ENCODE measurements at regions of chr11 and their contacts with region 1.

Region 1: GRCh38 chr11:3841426-3842350 is 929 bp upstream of the RHOG start:
- DNase-seq: peak; percentile 93
- H3K4me3 Mint-ChIP-seq: peak overlapping the region; percentile 90
- H3K27ac Mint-ChIP-seq: peak overlapping the region; percentile 96
- H3K4me1 Mint-ChIP-seq: peaks cover 44% of the 10 kb centered on the region
- H3K27me3 Mint-ChIP-seq: no peaks in the 10 kb centered on the region

Region 2: DNA sequence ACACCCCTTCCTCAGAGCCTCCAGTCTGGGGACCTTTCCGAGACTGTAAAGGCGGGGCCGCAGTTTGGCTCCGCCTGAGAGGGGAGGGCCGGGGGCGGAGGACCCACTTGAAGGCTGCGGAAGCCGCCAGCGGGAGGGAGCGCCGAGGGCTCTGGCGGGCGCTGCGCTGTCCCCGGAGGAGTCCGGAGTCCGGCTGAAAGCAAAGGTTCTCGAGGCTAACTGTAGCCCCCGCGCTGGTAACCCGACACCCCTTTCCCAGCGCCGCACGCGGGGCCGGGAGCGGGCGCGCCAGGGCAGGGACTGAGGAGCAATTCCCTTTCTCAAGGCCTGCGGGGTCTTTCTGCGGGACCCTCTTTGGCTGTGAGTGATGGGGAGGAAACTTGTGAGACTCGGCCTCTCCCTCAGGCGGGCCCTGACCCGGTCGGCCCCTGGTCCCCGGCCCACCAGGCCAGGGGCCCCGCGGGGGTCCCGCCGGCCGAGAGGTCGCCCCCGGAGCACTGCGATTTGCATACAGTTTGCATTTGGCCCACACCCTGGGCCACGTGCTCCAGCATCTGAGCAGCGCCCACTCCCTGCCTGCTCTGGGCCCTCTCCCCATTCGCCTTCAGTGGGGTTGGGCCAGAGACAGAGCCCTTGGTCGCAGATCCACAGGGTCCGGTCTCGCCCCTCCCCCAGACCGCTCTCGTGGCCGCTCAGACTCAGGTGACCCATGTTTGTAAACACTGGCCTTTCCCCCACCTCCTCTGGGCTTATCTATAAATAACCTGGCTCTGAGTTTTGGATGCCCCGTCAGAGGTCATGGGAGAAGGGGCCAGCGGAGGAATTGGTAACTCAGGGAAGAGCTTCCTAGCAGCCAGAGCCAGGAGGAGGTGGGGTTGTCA is 199.4 kb before region 1 on chr11:
- CTCF ChIA-PET with region 1: no interaction called
- POLR2A ChIA-PET with region 1: no interaction called
- DNase-seq: peak; percentile 72
- H3K4me3 Mint-ChIP-seq: peak overlapping the region; percentile 61
- H3K27ac Mint-ChIP-seq: no peak overlapping the region
- H3K4me1 Mint-ChIP-seq: peaks cover 9% of the 10 kb centered on the region
- H3K27me3 Mint-ChIP-seq: peaks cover 35% of the 10 kb centered on the region

Region 3: GRCh38 chr11:3781423-3781822 is 60.3 kb before region 1 on chr11:
- CTCF ChIA-PET with region 1: interaction called, 5 read pairs
- POLR2A ChIA-PET with region 1: interaction called, 11 read pairs
- DNase-seq: no peak
- H3K4me3 Mint-ChIP-seq: no peak overlapping the region
- H3K27ac Mint-ChIP-seq: peak overlapping the region; percentile 12
- H3K4me1 Mint-ChIP-seq: peaks cover 50% of the 10 kb centered on the region
- H3K27me3 Mint-ChIP-seq: no peaks in the 10 kb centered on the region

Region 4: DNA sequence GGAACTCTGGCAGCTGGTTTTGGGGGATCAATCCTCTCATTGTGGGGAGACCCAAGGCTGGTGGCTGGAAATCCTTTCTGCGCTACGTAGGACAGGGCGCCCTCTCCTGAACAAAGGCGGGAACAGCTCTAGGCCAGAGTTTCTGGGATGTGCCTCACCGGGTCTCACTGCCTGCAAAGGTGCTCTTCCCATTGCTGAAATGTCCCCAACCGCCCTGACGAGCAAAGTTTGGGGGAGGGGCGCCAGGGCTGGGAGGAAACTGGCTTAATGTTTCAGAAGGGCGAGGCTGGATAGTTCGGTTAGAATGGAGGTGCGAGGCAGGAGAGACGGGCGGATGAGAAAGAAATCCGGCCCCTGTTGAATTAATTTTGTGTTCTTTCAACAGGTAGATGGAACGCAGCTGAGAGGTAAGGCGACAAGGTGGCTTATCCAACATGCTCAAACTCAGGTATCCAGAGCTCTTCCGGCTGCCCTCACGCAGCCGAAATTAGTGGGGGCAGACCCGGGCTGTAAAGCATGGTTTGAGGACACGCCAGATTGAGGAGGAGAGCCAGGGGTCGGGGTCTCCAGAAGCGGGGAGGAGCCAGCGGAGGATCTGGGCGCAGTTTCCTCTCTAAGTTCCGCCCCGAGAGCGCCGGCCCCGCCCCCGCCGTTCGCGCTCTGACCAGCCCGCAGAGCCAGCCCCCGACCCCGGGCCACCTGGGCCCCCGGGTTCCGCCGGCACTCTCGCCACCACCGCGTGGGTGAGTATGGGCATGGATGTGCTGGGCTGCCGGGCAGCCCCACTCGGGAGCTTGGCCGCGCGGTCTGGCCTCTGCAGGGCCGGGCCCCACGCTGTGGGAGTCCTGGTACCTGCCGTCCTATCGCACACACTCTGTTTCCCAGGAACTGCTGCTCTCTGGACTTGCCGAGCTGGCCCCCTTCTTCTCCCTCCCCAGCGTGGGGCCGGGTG is 33.5 kb before region 1 on chr11 and contains the start of gene PGAP2:
- CTCF ChIA-PET with region 1: interaction called, 24 read pairs
- POLR2A ChIA-PET with region 1: interaction called, 58 read pairs
- DNase-seq: peak; percentile 65
- H3K4me3 Mint-ChIP-seq: peak within 1 kb of the TSS; percentile 85
- H3K27ac Mint-ChIP-seq: peak within 1 kb of the TSS; percentile 64
- H3K4me1 Mint-ChIP-seq: peaks cover 20% of the 10 kb centered on the region
- H3K27me3 Mint-ChIP-seq: no peaks in the 10 kb centered on the region
- total RNA-seq, gene PGAP2: 18.0 to 19.0 TPM

Region 5: DNA sequence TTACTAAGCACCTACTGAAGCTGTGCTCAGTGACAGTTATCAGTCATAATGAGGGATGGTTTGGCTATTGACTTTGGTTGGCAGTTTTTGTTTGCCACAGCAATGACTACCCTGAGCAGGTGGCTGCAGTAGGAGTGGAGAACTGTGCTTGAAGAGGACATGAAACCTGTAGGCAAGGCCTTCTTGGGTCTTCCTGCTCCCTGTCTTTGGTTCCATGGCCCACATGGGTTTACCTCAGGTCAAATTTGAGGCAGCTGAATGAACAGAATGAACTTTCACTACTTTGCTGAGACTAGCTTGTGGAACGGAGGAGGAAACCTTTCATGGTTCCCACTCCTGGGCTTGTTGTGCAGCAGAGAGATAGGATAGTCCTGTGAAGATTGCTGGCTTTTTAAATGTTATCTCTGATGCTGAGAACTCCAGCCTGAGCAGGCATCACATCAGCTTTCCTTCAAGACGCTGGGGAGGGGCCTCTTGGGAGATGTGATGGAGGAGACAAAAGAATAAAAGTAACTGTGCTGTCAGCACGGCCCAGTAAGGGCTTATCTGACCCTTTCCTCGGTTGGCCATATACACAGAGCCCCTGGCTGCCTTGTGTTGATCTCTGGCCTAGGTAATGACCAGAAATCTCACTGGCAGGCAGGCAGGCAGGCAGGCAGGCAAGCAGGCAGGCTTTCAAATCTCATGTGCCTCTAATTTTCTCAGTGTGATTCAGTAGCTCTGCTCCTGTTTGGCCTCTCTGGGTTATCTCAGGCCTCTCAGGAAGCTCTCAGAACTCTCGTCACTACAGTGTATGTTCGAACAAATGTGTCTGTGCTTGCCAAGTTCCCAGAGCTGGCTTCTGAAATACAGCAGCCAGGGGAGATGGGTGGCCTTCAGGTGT is 25.8 kb after region 1 on chr11:
- CTCF ChIA-PET with region 1: no interaction called
- POLR2A ChIA-PET with region 1: interaction called, 13 read pairs
- DNase-seq: no peak
- H3K4me3 Mint-ChIP-seq: no peak overlapping the region
- H3K27ac Mint-ChIP-seq: peak overlapping the region; percentile 50
- H3K4me1 Mint-ChIP-seq: peaks cover 81% of the 10 kb centered on the region
- H3K27me3 Mint-ChIP-seq: no peaks in the 10 kb centered on the region

Region 6: GRCh38 chr11:3947061-3947460 is 105.4 kb after region 1 on chr11:
- CTCF ChIA-PET with region 1: interaction called, 12 read pairs
- POLR2A ChIA-PET with region 1: interaction called, 18 read pairs
- DNase-seq: peak; percentile 72
- H3K4me3 Mint-ChIP-seq: peak overlapping the region; percentile 65
- H3K27ac Mint-ChIP-seq: peak overlapping the region; percentile 97
- H3K4me1 Mint-ChIP-seq: peaks cover 95% of the 10 kb centered on the region
- H3K27me3 Mint-ChIP-seq: no peaks in the 10 kb centered on the region

Region 7: GRCh38 chr11:4087551-4087950 is 245.9 kb after region 1 on chr11:
- CTCF ChIA-PET with region 1: interaction called, 6 read pairs
- POLR2A ChIA-PET with region 1: interaction called, 37 read pairs
- DNase-seq: no peak
- H3K4me3 Mint-ChIP-seq: no peak overlapping the region
- H3K27ac Mint-ChIP-seq: peak overlapping the region; percentile 64
- H3K4me1 Mint-ChIP-seq: peaks cover 64% of the 10 kb centered on the region
- H3K27me3 Mint-ChIP-seq: no peaks in the 10 kb centered on the region